Mammary epithelial cell (primary cell): ENCODE measurements at regions of chr6 and their contacts with region 1.

Region 1: DNA sequence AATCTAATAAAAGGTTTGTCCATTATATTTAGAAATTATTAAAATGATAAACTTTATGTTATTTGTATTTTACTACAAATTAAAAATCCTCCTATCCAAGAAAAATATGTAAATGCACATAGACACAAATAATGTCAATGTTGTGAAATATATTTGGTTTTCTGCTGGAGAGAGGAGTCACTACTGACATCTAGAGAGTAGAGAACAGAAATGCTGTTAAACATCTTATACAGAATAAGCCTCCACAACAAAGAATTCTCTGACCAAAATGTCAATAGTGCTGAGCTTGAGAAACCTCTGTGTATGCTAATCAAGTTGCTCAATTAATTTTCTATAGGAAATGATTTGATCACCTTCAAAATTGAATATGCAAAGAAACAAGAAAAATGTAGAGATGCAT is 12.4 kb downstream of the HTR1B start:
- DNase-seq: no peak
- H3K4me3 ChIP-seq: no peak overlapping the region
- H3K27ac ChIP-seq: no peak overlapping the region
- H3K4me1 ChIP-seq: peaks cover 3% of the 10 kb centered on the region
- H3K27me3 ChIP-seq: no peaks in the 10 kb centered on the region
- CTCF ChIP-seq: peak; percentile 21 to 37

Region 2: GRCh38 chr6:76682842-76683241 is 768.1 kb before region 1 on chr6:
- CTCF ChIA-PET with region 1: no interaction called
- dilution Hi-C with region 1: no loop called
- in situ Hi-C with region 1: loop called (anchors 5 to 25 kb)
- intact Hi-C with region 1: loop called (anchors 1 kb)
- DNase-seq: no peak
- H3K4me3 ChIP-seq: no peak overlapping the region
- H3K27ac ChIP-seq: no peak overlapping the region
- H3K4me1 ChIP-seq: no peaks in the 10 kb centered on the region
- H3K27me3 ChIP-seq: no peaks in the 10 kb centered on the region
- CTCF ChIP-seq: peak; percentile 34 to 41